OCI-LY7 (cell line): ENCODE measurements at regions of chr5 and their contacts with region 1.

Region 1: GRCh38 chr5:72366324-72366976 is 46.3 kb downstream of the PTCD2 start:
- DNase-seq: peak; percentile 72
- H3K4me3 ChIP-seq: no peak overlapping the region
- H3K27ac ChIP-seq: no peak overlapping the region
- H3K4me1 ChIP-seq: no peaks in the 10 kb centered on the region
- CTCF ChIP-seq: peak; percentile 88

Region 2: GRCh38 chr5:72412283-72413055 is 46.0 kb after region 1 on chr5:
- CTCF ChIA-PET with region 1: no interaction called
- POLR2A ChIA-PET with region 1: no interaction called
- intact Hi-C with region 1: no loop called
- DNase-seq: no peak
- H3K4me3 ChIP-seq: no peak overlapping the region
- H3K27ac ChIP-seq: no peak overlapping the region
- H3K4me1 ChIP-seq: no peaks in the 10 kb centered on the region
- CTCF ChIP-seq: no peak

Region 3: DNA sequence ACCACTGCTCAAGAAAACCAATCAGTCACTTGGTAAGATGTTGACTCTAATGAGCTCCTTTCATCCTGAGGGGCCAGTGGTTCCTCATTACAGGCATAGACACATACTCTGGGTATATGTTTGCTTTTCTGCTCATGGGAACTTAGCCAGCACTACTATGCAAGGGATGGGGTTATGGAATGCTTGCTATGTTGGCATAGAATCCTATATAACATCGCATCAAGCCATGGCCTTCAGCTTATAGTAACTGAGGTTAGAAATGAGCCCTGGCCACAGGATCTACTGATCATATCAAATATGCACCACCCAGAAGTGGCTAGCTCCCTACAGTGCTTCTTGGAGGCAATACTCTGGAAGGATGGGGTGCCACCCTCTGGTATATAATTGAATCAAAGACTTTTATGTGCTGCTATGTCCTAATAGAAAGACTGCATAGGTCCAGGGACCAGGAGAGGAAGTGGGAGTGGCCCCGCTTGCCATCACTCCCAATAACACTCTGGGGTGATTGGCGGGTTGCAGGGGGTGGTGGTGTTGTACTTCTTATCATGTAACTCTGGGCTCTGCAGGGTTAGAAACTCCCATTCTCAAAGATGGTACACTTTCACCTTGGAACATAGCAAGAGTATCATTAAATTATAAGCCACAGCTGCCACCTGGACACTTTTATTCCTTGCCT is 70.5 kb after region 1 on chr5:
- CTCF ChIA-PET with region 1: no interaction called
- POLR2A ChIA-PET with region 1: no interaction called
- intact Hi-C with region 1: no loop called
- DNase-seq: no peak
- H3K4me3 ChIP-seq: no peak overlapping the region
- H3K27ac ChIP-seq: no peak overlapping the region
- H3K4me1 ChIP-seq: no peaks in the 10 kb centered on the region
- CTCF ChIP-seq: no peak

Region 4: DNA sequence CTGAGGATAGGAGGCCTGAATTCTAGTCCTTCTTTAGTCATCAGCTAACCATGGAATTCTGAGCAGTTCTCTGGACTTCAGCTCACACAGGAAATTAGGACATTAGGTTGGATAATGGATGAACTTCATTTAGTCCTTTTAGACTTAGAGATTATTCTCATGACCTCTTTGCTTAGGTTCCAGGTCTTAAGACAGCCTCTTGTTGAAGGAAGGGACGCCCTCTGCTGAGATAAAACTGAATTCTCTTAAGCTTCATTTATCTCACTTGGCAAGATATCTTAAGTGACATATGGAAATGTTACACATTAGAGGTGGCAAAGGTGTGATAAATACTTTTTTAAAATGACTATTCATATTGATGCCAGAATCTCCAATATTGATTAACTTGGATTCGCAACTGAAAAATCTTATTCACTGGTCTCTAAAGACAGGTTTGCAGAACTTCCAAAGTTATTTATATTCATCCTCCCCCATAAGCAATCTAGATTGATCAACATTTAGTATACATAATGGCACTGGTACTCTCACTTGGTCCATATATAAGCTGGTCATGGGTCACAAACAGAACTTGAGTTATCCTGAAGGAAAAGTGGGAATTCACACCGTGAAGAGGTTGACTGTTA is 157.6 kb after region 1 on chr5:
- CTCF ChIA-PET with region 1: no interaction called
- POLR2A ChIA-PET with region 1: no interaction called
- intact Hi-C with region 1: loop called (anchors 5 kb)
- DNase-seq: peak; percentile 53
- H3K4me3 ChIP-seq: no peak overlapping the region
- H3K27ac ChIP-seq: no peak overlapping the region
- H3K4me1 ChIP-seq: no peaks in the 10 kb centered on the region
- CTCF ChIP-seq: peak; percentile 78

Region 5: DNA sequence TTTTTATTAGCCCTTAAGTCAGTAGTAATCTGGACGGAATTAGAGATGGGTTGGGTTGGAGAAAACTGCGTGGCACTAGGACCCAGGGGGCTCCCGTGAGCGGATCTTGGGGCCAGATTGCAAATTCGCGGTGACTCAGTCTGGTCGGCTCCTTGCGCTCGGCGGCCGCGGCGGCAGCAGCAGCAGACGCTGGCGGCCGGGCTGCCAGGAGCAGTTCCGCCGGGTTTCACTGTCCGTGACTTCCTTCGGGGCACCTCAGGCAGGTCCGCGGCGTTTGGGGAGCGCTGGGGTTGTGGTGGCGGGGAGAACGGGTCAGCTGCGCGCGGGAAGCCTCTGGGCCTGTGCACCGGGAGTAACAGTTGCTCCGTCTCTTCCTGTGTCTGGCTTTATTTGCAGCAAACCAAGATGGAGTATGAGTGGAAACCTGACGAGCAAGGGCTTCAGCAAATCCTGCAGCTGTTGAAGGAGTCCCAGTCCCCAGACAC is 481.6 kb after region 1 on chr5:
- CTCF ChIA-PET with region 1: no interaction called
- POLR2A ChIA-PET with region 1: no interaction called
- intact Hi-C with region 1: no loop called
- DNase-seq: peak; percentile 90
- H3K4me3 ChIP-seq: peak overlapping the region; percentile 99
- H3K27ac ChIP-seq: peak overlapping the region; percentile 93
- H3K4me1 ChIP-seq: peaks cover 39% of the 10 kb centered on the region
- CTCF ChIP-seq: no peak